ENCODE measurements at regions of chr2 and their contacts with region 1.

Region 1: DNA sequence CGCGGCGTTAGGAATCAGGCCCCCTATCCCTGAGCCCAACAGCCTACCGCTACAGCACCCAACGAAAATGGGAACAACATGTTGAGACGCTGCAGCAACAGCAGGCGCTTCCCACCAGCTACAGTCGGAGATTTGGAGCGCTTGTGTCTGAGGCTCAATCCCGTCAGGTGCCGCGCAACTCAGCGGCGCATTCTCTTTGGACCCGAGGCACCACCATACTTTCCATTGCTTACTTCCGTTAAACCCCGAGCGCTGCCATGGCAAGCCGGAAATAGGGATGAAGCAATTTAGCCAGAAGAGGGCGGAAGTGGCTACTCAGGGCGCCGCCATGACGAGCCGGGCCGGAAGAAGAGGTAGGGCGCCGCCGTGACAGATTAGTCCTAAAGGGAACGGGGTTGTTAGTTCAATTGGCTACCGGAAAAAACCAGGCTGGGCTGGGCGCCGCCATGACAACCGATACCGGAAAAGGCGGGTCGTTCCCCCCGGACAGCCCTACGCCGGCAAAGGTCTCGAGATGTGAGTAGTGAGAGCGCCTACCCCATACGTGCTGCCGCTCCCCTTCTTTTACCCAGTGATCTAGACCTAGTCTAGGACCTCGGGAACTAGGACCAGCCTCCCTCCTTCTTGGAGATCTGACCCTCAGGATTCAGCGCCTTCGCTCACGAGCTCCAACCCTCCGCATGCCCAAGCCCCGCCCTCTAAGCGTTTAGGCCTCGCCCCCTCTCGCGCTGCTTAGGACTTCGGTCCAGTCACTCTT is at the start of gene CHCHD5:
- DNase-seq: peak; percentile 92
- ATAC-seq: peak; percentile 88
- H3K4me3 ChIP-seq: peak within 1 kb of the TSS; percentile 89 to 91
- H3K27ac ChIP-seq: peak within 1 kb of the TSS; percentile 96
- H3K4me1 ChIP-seq: peaks cover 15 to 28% of the 10 kb centered on the region in 2 experiments
- H3K27me3 ChIP-seq: no peaks in the 10 kb centered on the region
- CTCF ChIP-seq: peak in 1 of 3 experiments; percentile 14; a peak in 1 of 6 replicates
- POLR2A ChIP-seq: peak; percentile 62
- RAD21 ChIP-seq: no peak
- total RNA-seq, gene CHCHD5: 49.8 TPM

Region 2: DNA sequence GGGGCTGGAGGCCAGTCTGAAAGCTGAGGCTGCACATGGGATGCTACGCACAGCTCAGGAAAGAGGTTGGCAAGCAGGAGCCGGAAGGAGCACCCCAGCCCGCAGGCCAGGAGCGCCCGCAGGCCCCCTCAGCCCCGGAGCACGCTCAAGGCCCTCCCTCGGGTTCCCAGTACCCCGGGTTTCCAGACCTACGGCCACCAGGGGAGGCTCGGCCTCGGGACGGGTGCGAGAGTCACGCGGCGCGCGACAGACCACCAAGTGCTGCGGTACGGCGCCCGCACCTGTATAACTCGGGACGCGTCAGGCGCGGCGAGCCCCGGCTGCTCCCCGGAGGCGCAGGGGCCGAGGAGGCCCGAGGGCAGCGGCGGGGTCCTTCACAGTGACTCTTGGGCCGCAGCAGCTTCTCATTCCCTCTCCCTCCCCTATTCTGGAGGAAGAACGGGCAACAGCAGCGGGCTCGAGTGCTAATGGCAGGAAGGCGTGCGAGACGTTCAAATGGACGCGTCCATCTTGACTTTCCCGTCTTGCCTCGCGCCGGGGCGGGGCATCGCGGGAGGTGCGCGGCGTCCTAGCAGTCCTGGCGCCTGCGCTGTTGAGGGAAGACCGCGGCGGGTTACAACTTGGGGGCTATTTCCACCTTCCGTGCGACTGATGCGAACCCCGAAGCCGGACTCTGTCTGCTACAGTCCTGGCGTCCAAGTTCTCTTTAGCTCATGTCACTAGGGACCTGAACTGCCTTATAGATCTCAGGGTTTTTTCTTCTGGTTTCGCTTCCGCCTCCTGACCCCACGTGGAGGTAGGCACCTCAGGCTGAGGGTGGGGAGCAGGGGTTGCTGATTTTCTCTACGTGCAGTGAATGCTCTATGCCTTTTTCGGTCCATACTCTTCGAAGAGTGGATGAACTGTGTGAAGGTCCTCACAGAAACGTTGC is 700.4 kb before region 1 on chr2 and contains the start of gene ANAPC1:
- CTCF ChIA-PET with region 1: no interaction called
- POLR2A ChIA-PET with region 1: no interaction called
- RAD21 ChIA-PET with region 1: interaction called in 1 of 2 experiments, 3 read pairs
- intact Hi-C with region 1: loop called (anchors 5 kb)
- DNase-seq: peak; percentile 61
- ATAC-seq: peak; percentile 92
- H3K4me3 ChIP-seq: peak within 1 kb of the TSS; percentile 96 to 99
- H3K27ac ChIP-seq: peak within 1 kb of the TSS; percentile 97
- H3K4me1 ChIP-seq: peaks cover 0 to 5% of the 10 kb centered on the region in 2 experiments; a peak in 1 of 4 replicates
- H3K27me3 ChIP-seq: no peaks in the 10 kb centered on the region
- CTCF ChIP-seq: no peak
- POLR2A ChIP-seq: peak; percentile 94
- RAD21 ChIP-seq: no peak
- total RNA-seq, gene ANAPC1: 76.5 TPM

Region 3: DNA sequence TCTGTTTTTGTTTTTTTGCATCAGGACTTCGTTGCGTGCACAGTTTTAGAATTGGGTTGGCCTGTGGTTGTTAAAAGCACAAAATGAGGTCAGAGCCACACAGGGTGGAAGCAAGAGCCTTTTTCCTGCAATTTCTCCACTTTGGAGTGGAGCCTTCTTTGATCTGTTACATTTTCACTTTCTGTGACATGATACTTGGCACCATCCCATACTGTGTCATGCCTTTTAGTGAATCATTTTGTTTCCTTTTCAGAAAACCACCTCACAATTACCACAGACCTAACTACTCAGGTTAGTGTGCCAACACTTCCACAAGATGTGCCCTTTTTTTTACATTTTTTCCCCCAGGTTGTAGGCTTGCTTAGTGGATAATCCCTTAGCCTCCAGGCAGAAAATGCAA is 653.4 kb before region 1 on chr2:
- CTCF ChIA-PET with region 1: no interaction called
- POLR2A ChIA-PET with region 1: no interaction called
- RAD21 ChIA-PET with region 1: no interaction called
- intact Hi-C with region 1: no loop called
- DNase-seq: no peak
- ATAC-seq: no peak
- H3K4me3 ChIP-seq: no peak overlapping the region
- H3K27ac ChIP-seq: no peak overlapping the region
- H3K4me1 ChIP-seq: peaks cover 0 to 6% of the 10 kb centered on the region in 2 experiments; a peak in 2 of 4 replicates
- H3K27me3 ChIP-seq: no peaks in the 10 kb centered on the region
- CTCF ChIP-seq: no peak
- POLR2A ChIP-seq: no peak
- RAD21 ChIP-seq: no peak

Region 4: DNA sequence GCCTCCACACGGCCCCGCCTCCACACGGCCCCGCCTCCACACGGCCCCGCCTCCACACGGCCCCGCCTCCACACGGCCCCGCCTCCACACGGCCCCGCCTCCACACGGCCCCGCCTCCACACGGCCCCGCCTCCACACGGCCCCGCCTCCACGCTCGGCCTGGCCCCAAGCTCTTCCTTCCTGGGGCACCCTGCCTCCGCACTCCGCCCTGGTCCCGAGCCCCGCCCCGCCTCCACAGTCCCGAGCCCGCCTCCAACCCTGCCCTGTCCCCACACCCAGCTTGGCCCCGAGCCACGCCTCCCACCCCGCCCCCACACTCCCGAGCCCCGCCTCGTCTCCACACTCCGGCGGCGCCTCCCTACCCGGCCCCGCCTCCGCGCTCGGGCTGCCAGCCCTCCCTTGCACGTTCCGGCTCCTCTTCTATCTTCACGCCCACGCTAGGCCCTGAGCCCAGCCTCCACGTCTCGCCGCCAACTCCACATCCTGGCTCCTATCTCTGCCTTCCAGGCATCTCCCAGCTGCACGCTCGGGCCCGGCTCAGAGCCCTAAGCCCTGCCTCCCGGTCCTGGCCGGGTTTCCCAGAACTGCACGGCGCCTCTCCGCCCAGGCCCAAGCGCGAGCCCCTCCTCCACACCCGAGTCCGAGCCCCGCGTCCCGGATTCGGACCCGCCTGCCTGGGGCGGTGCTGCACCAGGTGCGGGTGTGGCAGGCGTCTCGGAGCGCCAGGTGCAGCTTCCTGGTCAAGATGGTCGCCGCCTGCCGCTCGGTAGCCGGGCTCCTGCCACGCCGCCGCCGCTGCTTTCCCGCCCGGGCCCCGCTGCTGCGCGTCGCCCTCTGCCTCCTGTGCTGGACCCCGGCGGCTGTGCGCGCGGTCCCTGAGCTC is 529.2 kb before region 1 on chr2 and contains the start of gene TMEM87B:
- CTCF ChIA-PET with region 1: no interaction called
- POLR2A ChIA-PET with region 1: no interaction called
- RAD21 ChIA-PET with region 1: no interaction called
- intact Hi-C with region 1: loop called (anchors 2 kb)
- DNase-seq: peak; percentile 87
- ATAC-seq: peak; percentile 74
- H3K4me3 ChIP-seq: peak within 1 kb of the TSS; percentile 62 to 89
- H3K27ac ChIP-seq: peak within 1 kb of the TSS; percentile 95
- H3K4me1 ChIP-seq: peaks cover 16 to 21% of the 10 kb centered on the region in 2 experiments
- H3K27me3 ChIP-seq: no peaks in the 10 kb centered on the region
- CTCF ChIP-seq: no peak
- POLR2A ChIP-seq: no peak
- RAD21 ChIP-seq: no peak
- total RNA-seq, gene TMEM87B: 14.8 TPM

Region 5: GRCh38 chr2:112121682-112122254 is 462.5 kb before region 1 on chr2:
- CTCF ChIA-PET with region 1: interaction called, 13 read pairs
- POLR2A ChIA-PET with region 1: interaction called, 3 read pairs
- RAD21 ChIA-PET with region 1: no interaction called
- intact Hi-C with region 1: loop called (anchors 1 kb)
- DNase-seq: peak; percentile 26
- ATAC-seq: no peak
- H3K4me3 ChIP-seq: no peak overlapping the region
- H3K27ac ChIP-seq: no peak overlapping the region
- H3K4me1 ChIP-seq: no peaks in the 10 kb centered on the region
- H3K27me3 ChIP-seq: no peaks in the 10 kb centered on the region
- CTCF ChIP-seq: peak; percentile 58 to 78 (median 71); a peak in 5 of 6 replicates
- POLR2A ChIP-seq: no peak
- RAD21 ChIP-seq: peak; percentile 83

Region 6: DNA sequence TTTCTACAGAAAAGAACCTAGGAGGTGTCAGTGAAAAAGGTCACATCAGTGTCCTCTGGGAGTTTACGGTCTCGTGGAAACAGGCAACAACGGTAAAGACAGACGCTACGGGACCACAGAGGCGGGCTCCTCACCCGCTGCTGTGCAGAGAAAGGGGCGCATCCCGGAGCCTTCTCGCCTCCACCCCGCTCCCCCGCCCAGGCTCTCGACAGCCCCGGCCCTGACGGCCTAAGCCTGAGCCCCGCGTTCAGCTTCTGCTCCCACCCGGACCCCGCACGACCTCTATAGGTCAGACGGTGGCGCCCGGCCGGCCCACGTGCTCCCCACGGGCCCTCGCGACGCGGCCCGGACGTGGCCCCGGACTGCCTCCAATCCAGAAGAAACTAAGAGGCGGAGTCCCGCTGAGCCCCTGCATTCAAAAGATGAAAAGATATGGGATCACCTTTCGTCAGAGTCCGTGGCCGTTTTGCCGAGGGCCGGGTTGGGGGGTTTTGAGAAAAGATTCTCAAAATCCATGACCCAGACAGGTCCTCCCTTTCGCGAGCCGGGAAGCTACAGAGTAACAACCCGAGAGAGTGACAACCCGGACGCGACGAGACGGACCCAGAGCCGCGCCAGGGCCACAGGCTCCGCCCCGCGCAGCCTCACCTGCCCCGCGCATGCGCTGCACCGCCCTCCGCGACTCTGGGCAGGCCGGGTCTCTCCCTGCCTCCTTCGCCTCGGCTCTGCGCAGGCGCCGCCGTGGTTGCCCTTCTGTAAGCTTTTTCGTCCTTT is 329.7 kb before region 1 on chr2 and contains the start of gene ZC3H8:
- CTCF ChIA-PET with region 1: interaction called, 3 read pairs
- POLR2A ChIA-PET with region 1: no interaction called
- RAD21 ChIA-PET with region 1: no interaction called
- intact Hi-C with region 1: loop called (anchors 5 kb)
- DNase-seq: peak; percentile 75
- ATAC-seq: peak; percentile 98
- H3K4me3 ChIP-seq: peak within 1 kb of the TSS; percentile 70 to 72
- H3K27ac ChIP-seq: peak within 1 kb of the TSS; percentile 67
- H3K4me1 ChIP-seq: peaks cover 0 to 20% of the 10 kb centered on the region in 2 experiments; a peak in 2 of 4 replicates
- H3K27me3 ChIP-seq: no peaks in the 10 kb centered on the region
- CTCF ChIP-seq: no peak
- POLR2A ChIP-seq: peak; percentile 83
- RAD21 ChIP-seq: no peak
- total RNA-seq, gene ZC3H8: 13.4 TPM

Region 7: GRCh38 chr2:112481050-112481527 is 103.2 kb before region 1 on chr2:
- CTCF ChIA-PET with region 1: no interaction called
- POLR2A ChIA-PET with region 1: no interaction called
- RAD21 ChIA-PET with region 1: no interaction called
- intact Hi-C with region 1: loop called (anchors 2 kb)
- DNase-seq: peak; percentile 67
- ATAC-seq: peak; percentile 81
- H3K4me3 ChIP-seq: peak overlapping the region; percentile 62
- H3K27ac ChIP-seq: peak overlapping the region; percentile 87
- H3K4me1 ChIP-seq: peaks cover 15 to 24% of the 10 kb centered on the region in 2 experiments; a peak in 3 of 4 replicates
- H3K27me3 ChIP-seq: no peaks in the 10 kb centered on the region
- CTCF ChIP-seq: peak; percentile 72 to 87 (median 79)
- POLR2A ChIP-seq: peak; percentile 6
- RAD21 ChIP-seq: peak; percentile 84

Measured in HCT116 (cell line).